CD8-positive, alpha-beta memory T cell (primary cell): ENCODE measurements at regions of chr20 and their contacts with region 1.

Region 1: GRCh38 chr20:3767427-3768341 is at the start of gene ADISSP:
- DNase-seq: peak; percentile 95 to 98 (median 96)
- H3K4me3 ChIP-seq: peak within 1 kb of the TSS; percentile 91
- H3K4me3 Mint-ChIP-seq: peak within 1 kb of the TSS; percentile 83 to 98 (median 90)
- H3K27ac ChIP-seq: peak within 1 kb of the TSS; percentile 93
- H3K27ac Mint-ChIP-seq: peak within 1 kb of the TSS; percentile 87 to 99 (median 98)
- H3K4me1 ChIP-seq: peaks cover 22% of the 10 kb centered on the region
- H3K4me1 Mint-ChIP-seq: peaks cover 7 to 28% (median 19%) of the 10 kb centered on the region in 3 donors
- H3K27me3 ChIP-seq: no peaks in the 10 kb centered on the region
- H3K27me3 Mint-ChIP-seq: peaks cover 5 to 7% of the 10 kb centered on the region in 2 donors
- total RNA-seq, gene ADISSP: 72.7 to 74.9 TPM

Region 2: DNA sequence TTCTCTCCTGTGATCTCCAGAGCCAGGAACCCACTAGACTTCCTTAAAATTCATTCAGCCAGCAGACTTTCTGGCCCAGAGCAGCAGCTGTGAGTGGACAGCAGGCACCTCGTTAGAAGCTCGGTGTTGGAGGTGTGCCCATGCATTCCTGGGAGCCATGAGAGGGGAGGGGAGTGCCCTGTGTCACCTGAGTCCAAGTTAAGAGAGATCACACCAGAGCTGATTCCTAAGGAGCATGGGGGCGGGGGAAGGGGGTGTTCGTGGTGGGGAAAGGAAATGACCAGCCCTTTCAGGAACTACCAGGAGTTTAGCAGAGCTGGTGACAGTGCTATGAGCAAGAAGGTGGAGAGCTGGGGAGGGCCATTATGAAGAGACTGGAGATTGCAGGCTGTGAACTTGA is 151.4 kb before region 1 on chr20:
- CTCF ChIA-PET with region 1: no interaction called
- POLR2A ChIA-PET with region 1: no interaction called
- DNase-seq: no peak
- H3K4me3 ChIP-seq: no peak overlapping the region
- H3K4me3 Mint-ChIP-seq: no peak overlapping the region
- H3K27ac ChIP-seq: no peak overlapping the region
- H3K27ac Mint-ChIP-seq: no peak overlapping the region
- H3K4me1 ChIP-seq: no peaks in the 10 kb centered on the region
- H3K4me1 Mint-ChIP-seq: no peaks in the 10 kb centered on the region
- H3K27me3 ChIP-seq: no peaks in the 10 kb centered on the region
- H3K27me3 Mint-ChIP-seq: no peaks in the 10 kb centered on the region

Region 3: DNA sequence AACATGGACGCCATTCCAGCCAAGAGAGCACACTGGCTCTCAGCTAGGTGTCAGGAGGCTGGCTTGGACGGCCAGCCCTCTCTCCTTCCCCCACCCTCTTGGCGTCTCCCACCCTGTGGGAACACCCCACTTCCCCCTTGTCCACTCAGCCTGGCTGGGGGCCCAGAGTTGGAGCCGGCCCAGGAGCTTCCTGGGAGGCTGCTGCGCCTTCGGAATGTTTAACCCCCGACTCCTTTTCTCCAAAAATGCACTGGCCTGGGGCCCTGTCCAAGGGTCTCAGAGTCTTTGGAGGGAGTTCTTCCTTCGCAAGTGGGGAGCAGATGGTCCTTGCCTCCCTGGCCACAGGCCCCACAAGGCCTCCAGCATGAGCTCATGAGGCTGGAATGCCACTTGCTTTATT is 90.0 kb before region 1 on chr20:
- CTCF ChIA-PET with region 1: interaction called, 11 read pairs
- POLR2A ChIA-PET with region 1: no interaction called
- DNase-seq: no peak
- H3K4me3 ChIP-seq: no peak overlapping the region
- H3K4me3 Mint-ChIP-seq: no peak overlapping the region
- H3K27ac ChIP-seq: no peak overlapping the region
- H3K27ac Mint-ChIP-seq: no peak overlapping the region
- H3K4me1 ChIP-seq: no peaks in the 10 kb centered on the region
- H3K4me1 Mint-ChIP-seq: peaks cover 0 to 20% (median 8%) of the 10 kb centered on the region in 3 donors
- H3K27me3 ChIP-seq: peaks cover 11% of the 10 kb centered on the region
- H3K27me3 Mint-ChIP-seq: peaks cover 46 to 61% of the 10 kb centered on the region in 2 donors

Region 4: DNA sequence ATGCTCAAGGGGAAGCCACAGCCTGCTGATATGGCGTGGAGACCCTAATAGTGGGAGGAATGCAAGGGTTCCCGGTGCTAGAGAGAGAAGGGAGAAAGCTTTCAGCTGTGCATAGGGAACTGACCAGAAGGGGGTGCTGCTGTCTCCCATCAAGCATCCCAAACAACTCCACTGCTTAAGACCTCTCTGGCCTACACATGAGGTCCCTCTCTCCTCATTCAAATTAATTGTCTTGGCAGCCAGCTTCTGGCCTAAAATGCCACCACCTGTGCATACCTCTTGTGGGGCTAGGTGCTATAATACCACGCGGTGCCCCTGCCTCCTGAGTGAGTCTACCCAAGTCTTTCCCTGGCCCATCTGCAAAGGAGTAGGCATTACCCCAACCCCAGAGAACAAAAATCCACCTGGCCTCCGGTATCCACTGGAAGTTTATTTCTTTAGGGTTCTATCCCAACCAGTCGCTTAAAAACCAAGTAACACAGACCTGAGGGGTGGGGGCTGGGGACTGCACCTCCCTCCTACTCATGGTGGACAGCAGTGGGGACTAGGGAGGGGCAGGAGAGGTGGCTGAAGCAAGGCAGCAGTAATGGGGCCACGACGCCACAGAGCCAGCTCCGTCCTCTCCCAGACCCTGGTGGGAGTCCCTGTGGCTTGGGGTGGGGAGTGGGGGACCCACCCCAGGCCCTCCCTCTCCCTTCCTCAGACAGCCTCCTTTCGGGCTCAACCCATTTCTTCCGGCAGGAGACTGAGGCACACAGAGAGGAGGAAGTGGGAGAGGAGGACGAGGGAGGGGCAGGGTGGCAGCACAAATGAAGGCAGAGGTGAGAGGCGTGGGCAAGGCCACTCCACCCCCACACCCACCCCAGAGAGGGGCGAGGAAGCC is 14.3 kb before region 1 on chr20:
- CTCF ChIA-PET with region 1: interaction called, 16 read pairs
- POLR2A ChIA-PET with region 1: interaction called, 6 read pairs
- DNase-seq: peak; percentile 42 to 65 (median 46)
- H3K4me3 ChIP-seq: no peak overlapping the region
- H3K4me3 Mint-ChIP-seq: peak overlapping the region in 1 of 7 donors; percentile 24
- H3K27ac ChIP-seq: no peak overlapping the region
- H3K27ac Mint-ChIP-seq: peak overlapping the region in 2 of 8 donors; percentile 4 to 66
- H3K4me1 ChIP-seq: no peaks in the 10 kb centered on the region
- H3K4me1 Mint-ChIP-seq: peaks cover 6 to 18% (median 11%) of the 10 kb centered on the region in 3 donors
- H3K27me3 ChIP-seq: no peaks in the 10 kb centered on the region
- H3K27me3 Mint-ChIP-seq: peaks cover 0 to 4% of the 10 kb centered on the region in 2 donors

Region 5: GRCh38 chr20:3781153-3781910 is 13.6 kb after region 1 on chr20 and contains the start of gene SPEF1:
- CTCF ChIA-PET with region 1: interaction called, 21 read pairs
- POLR2A ChIA-PET with region 1: interaction called, 19 read pairs
- DNase-seq: peak in 2 of 5 donors; percentile 45 to 69
- H3K4me3 ChIP-seq: peak within 1 kb of the TSS; percentile 61
- H3K4me3 Mint-ChIP-seq: peak within 1 kb of the TSS; percentile 15 to 89 (median 69)
- H3K27ac ChIP-seq: no peak within 1 kb of the TSS
- H3K27ac Mint-ChIP-seq: peak within 1 kb of the TSS; percentile 11 to 91 (median 78)
- H3K4me1 ChIP-seq: peaks cover 23% of the 10 kb centered on the region
- H3K4me1 Mint-ChIP-seq: peaks cover 37 to 59% (median 38%) of the 10 kb centered on the region in 3 donors
- H3K27me3 ChIP-seq: no peaks in the 10 kb centered on the region
- H3K27me3 Mint-ChIP-seq: no peaks in the 10 kb centered on the region
- total RNA-seq, gene SPEF1: 0.13 to 0.24 TPM

Region 6: GRCh38 chr20:3786665-3787323 is 19.1 kb after region 1 on chr20 and contains the start of gene CENPB:
- CTCF ChIA-PET with region 1: interaction called, 10 read pairs
- POLR2A ChIA-PET with region 1: interaction called, 19 read pairs
- DNase-seq: peak; percentile 87 to 92 (median 89)
- H3K4me3 ChIP-seq: peak within 1 kb of the TSS; percentile 46
- H3K4me3 Mint-ChIP-seq: peak within 1 kb of the TSS; percentile 75 to 88 (median 83)
- H3K27ac ChIP-seq: peak within 1 kb of the TSS; percentile 16
- H3K27ac Mint-ChIP-seq: peak within 1 kb of the TSS; percentile 68 to 92 (median 85)
- H3K4me1 ChIP-seq: peaks cover 23% of the 10 kb centered on the region
- H3K4me1 Mint-ChIP-seq: peaks cover 29 to 39% (median 34%) of the 10 kb centered on the region in 3 donors
- H3K27me3 ChIP-seq: no peaks in the 10 kb centered on the region
- H3K27me3 Mint-ChIP-seq: no peaks in the 10 kb centered on the region
- total RNA-seq, gene CENPB: 66.4 to 69.9 TPM

Region 7: DNA sequence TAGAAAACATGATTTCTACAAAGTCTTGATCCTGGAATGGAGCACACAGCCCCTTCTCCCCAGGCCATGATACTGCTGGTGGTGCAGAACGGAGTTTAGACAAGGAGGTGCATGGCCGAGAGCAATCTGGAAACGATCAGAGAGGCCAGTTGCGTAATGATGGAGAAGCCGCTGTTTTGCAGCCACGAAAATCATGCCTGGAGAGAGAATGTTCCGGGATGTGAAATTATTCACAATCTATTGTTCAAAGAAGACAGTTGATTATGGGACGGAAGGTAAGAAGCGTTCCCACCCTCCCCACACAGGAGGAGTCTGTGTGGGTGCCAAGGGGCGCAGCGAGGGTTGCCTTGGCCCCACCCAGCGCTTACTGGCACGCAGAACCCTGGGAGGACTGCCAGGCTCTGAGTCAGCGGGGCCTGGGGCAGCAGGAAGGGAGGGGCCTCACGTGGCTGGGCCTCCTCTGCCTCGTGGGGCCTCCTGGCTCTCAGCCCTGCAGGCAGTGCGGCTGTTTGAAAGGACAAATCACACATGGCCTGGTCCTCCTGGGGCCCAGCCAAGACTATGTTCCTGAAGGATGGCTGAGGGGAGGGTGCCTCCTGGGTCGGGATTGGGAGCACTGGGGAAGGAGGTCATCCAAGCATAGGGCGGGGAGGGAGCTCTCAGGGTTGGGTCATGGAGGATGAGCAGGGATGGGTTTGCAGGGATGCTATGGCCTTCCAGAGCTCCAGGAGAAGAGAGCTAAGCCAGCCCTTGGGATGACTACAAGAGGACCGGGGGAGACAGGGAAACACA is 44.0 kb after region 1 on chr20:
- CTCF ChIA-PET with region 1: interaction called, 10 read pairs
- POLR2A ChIA-PET with region 1: interaction called, 11 read pairs
- DNase-seq: peak; percentile 86 to 97 (median 92)
- H3K4me3 ChIP-seq: peak overlapping the region; percentile 52
- H3K4me3 Mint-ChIP-seq: peak overlapping the region; percentile 88 to 94 (median 93)
- H3K27ac ChIP-seq: peak overlapping the region; percentile 66
- H3K27ac Mint-ChIP-seq: peak overlapping the region; percentile 97 to 100 (median 100)
- H3K4me1 ChIP-seq: peaks cover 80% of the 10 kb centered on the region
- H3K4me1 Mint-ChIP-seq: peaks cover 73 to 85% (median 80%) of the 10 kb centered on the region in 3 donors
- H3K27me3 ChIP-seq: no peaks in the 10 kb centered on the region
- H3K27me3 Mint-ChIP-seq: no peaks in the 10 kb centered on the region

Region 8: GRCh38 chr20:3820048-3820900 is 52.6 kb after region 1 on chr20 and contains the start of gene AP5S1:
- CTCF ChIA-PET with region 1: interaction called, 29 read pairs
- POLR2A ChIA-PET with region 1: interaction called, 14 read pairs
- DNase-seq: peak; percentile 89 to 94 (median 93)
- H3K4me3 ChIP-seq: peak within 1 kb of the TSS; percentile 82
- H3K4me3 Mint-ChIP-seq: peak within 1 kb of the TSS; percentile 87 to 97 (median 94)
- H3K27ac ChIP-seq: peak within 1 kb of the TSS; percentile 94
- H3K27ac Mint-ChIP-seq: peak within 1 kb of the TSS; percentile 96 to 100 (median 97)
- H3K4me1 ChIP-seq: peaks cover 49% of the 10 kb centered on the region
- H3K4me1 Mint-ChIP-seq: peaks cover 45 to 65% (median 57%) of the 10 kb centered on the region in 3 donors
- H3K27me3 ChIP-seq: no peaks in the 10 kb centered on the region
- H3K27me3 Mint-ChIP-seq: no peaks in the 10 kb centered on the region
- total RNA-seq, gene AP5S1: 14.0 to 15.7 TPM